ENCODE measurements at regions of chr16 and their contacts with region 1.

Region 1: GRCh38 chr16:2329551-2329950 is 11.0 kb downstream of the ABCA3 start:
- DNase-seq: no peak
- ATAC-seq: no peak
- H3K4me3 ChIP-seq: no peak overlapping the region
- H3K4me3 Mint-ChIP-seq: no peak overlapping the region
- H3K27ac ChIP-seq: no peak overlapping the region
- H3K27ac Mint-ChIP-seq: no peak overlapping the region
- H3K4me1 ChIP-seq: no peaks in the 10 kb centered on the region
- H3K4me1 Mint-ChIP-seq: no peaks in the 10 kb centered on the region
- H3K27me3 ChIP-seq: no peaks in the 10 kb centered on the region
- H3K27me3 Mint-ChIP-seq: no peaks in the 10 kb centered on the region
- CTCF ChIP-seq: no peak

Region 2: DNA sequence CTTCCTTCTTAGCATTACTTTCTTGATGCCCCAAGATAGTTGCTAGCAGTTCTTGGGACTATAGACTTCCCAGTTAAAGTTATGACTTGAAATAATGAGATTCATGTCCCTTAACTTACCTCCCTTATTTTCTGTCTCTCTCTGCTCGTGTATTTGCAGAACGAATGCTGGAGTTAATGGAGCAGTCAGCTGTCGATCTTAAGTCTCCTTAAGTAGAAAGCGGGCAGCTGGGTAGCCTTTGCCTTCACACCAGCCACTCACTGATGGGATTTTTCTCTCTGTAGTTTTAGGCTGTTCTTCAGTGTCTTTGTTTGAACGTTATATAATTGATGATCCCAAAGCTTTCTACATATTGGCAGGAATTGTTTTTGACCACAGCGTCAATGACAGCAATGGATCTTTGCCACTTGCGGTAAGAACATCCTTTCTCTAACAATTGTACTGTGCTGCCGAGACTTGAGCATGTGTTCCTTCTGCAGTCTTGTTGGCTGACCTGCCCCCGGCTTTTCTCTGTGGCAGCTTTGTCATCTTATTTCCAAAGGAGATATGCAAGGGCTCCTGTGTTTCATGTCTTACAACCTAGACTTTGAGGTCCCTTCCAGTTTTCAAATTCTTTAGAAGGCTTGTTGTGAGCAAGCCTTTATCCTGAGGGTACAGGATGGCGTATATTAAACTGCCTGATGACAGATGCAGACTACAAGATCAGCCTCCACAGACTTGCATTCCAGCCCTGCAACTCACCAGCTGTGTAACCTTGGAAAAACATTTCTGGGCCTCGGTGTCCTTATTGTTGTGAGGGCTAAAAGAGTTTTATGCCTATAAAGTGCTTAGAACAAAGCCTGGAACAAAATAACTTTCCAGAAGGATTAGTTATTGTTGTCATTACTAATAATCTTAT is 36.1 kb after region 1 on chr16:
- CTCF ChIA-PET with region 1: no interaction called
- POLR2A ChIA-PET with region 1: no interaction called
- intact Hi-C with region 1: loop called in 1 of 2 experiments (anchors 5 kb)
- DNase-seq: no peak
- ATAC-seq: no peak
- H3K4me3 ChIP-seq: no peak overlapping the region
- H3K4me3 Mint-ChIP-seq: no peak overlapping the region
- H3K27ac ChIP-seq: no peak overlapping the region
- H3K27ac Mint-ChIP-seq: no peak overlapping the region
- H3K4me1 ChIP-seq: no peaks in the 10 kb centered on the region
- H3K4me1 Mint-ChIP-seq: no peaks in the 10 kb centered on the region
- H3K27me3 ChIP-seq: peaks cover 17 to 26% of the 10 kb centered on the region in 2 experiments
- H3K27me3 Mint-ChIP-seq: peaks cover 58% of the 10 kb centered on the region
- CTCF ChIP-seq: no peak